Stomach (tissue), 19 donors: ENCODE measurements at regions of chr11 and their contacts with region 1.

Region 1: DNA sequence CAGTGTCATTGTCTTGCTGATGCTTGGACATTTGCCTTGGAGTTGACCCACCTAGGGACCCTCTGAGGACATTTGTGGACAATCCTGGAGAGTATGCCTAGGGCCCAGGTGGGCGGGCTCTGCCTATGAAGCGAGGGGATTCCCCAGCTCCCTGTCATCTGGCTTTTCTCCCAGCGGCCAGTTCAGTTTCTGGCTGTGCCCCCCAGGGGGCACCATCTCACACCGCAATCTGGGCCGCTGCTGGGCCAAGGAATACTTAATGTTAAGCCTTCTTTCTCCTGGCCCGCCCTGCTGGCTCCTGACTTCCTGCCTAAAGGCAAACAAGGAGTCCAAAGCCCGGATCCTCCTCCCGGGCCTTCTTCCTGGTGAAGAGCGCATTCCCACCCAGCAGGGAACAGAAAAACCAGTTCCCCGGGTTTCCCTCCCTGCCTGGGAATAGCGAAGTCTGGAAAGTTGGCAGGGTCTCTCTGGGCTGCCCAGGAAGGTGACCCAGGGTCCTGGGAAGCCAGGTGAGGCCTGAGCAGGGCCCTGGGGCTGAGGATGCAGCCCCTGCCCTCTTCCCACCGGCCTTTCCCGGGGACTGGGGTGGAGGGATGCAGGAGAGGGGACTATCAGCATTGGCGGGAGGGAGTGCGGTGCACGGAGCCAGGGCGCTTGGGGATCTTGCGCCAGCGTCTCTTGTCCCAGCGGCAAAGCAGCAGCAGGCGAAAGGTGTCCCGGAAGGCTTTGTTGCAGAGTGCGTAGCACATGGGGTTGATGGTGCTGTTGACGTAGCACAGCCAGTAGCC is 11.9 kb downstream of the CHRM1 start:
- DNase-seq: peak; percentile 90 to 92
- H3K4me3 ChIP-seq: no peak overlapping the region
- H3K27ac ChIP-seq: peak overlapping the region; percentile 31 to 72 (median 68)
- H3K4me1 ChIP-seq: peaks cover 18 to 29% (median 28%) of the 10 kb centered on the region in 4 donors
- H3K27me3 ChIP-seq: no peaks in the 10 kb centered on the region
- CTCF ChIP-seq: peak in 4 of 7 experiments; percentile 38 to 65 (median 52)
- EP300 ChIP-seq: no peak
- POLR2A ChIP-seq: no peak

Region 2: GRCh38 chr11:62632492-62632891 is 276.8 kb before region 1 on chr11:
- intact Hi-C with region 1: no loop called
- DNase-seq: no peak
- H3K4me3 ChIP-seq: no peak overlapping the region
- H3K27ac ChIP-seq: peak overlapping the region in 1 of 5 donors; percentile 7
- H3K4me1 ChIP-seq: peaks cover 6 to 12% (median 10%) of the 10 kb centered on the region in 4 donors
- H3K27me3 ChIP-seq: no peaks in the 10 kb centered on the region
- CTCF ChIP-seq: no peak
- EP300 ChIP-seq: no peak
- POLR2A ChIP-seq: no peak

Region 3: GRCh38 chr11:63023841-63024648 is 114.7 kb after region 1 on chr11:
- intact Hi-C with region 1: loop called (anchors 2 kb)
- DNase-seq: peak; percentile 93
- H3K4me3 ChIP-seq: no peak overlapping the region
- H3K27ac ChIP-seq: peak overlapping the region in 1 of 5 donors; percentile 49
- H3K4me1 ChIP-seq: peaks cover 0 to 10% (median 8%) of the 10 kb centered on the region in 4 donors
- H3K27me3 ChIP-seq: no peaks in the 10 kb centered on the region
- CTCF ChIP-seq: peak in 6 of 7 experiments; percentile 98 to 100 (median 100)
- EP300 ChIP-seq: no peak
- POLR2A ChIP-seq: no peak